ENCODE measurements at regions of chr9 and their contacts with region 1.

Region 1: GRCh38 chr9:129177791-129178559 is at the start of gene IER5L:
- DNase-seq: peak; percentile 88 to 96 (median 91)
- H3K4me3 ChIP-seq: peak within 1 kb of the TSS; percentile 71
- H3K4me3 Mint-ChIP-seq: peak within 1 kb of the TSS; percentile 91 to 98 (median 93)
- H3K27ac ChIP-seq: peak within 1 kb of the TSS; percentile 72
- H3K27ac Mint-ChIP-seq: peak within 1 kb of the TSS; percentile 47 to 91 (median 80)
- H3K4me1 ChIP-seq: no peaks in the 10 kb centered on the region
- H3K4me1 Mint-ChIP-seq: peaks cover 9 to 20% (median 9%) of the 10 kb centered on the region in 3 donors
- H3K27me3 ChIP-seq: peaks cover under 1% of the 10 kb centered on the region
- H3K27me3 Mint-ChIP-seq: peaks cover 0 to 4% of the 10 kb centered on the region in 2 donors
- total RNA-seq, gene IER5L: 2.8 to 3.0 TPM

Region 2: GRCh38 chr9:129131300-129132145 is 46.5 kb before region 1 on chr9:
- CTCF ChIA-PET with region 1: interaction called, 16 read pairs
- POLR2A ChIA-PET with region 1: no interaction called
- DNase-seq: peak; percentile 75 to 87 (median 77)
- H3K4me3 ChIP-seq: no peak overlapping the region
- H3K4me3 Mint-ChIP-seq: peak overlapping the region in 1 of 7 donors; percentile 13
- H3K27ac ChIP-seq: no peak overlapping the region
- H3K27ac Mint-ChIP-seq: peak overlapping the region in 5 of 8 donors; percentile 32 to 87 (median 63)
- H3K4me1 ChIP-seq: peaks cover 5% of the 10 kb centered on the region
- H3K4me1 Mint-ChIP-seq: peaks cover 5 to 6% (median 6%) of the 10 kb centered on the region in 3 donors
- H3K27me3 ChIP-seq: no peaks in the 10 kb centered on the region
- H3K27me3 Mint-ChIP-seq: no peaks in the 10 kb centered on the region

Region 3: GRCh38 chr9:129145822-129146292 is 32.1 kb before region 1 on chr9:
- CTCF ChIA-PET with region 1: interaction called, 122 read pairs
- POLR2A ChIA-PET with region 1: interaction called, 5 read pairs
- DNase-seq: no peak
- H3K4me3 ChIP-seq: no peak overlapping the region
- H3K4me3 Mint-ChIP-seq: peak overlapping the region in 1 of 7 donors; percentile 63
- H3K27ac ChIP-seq: no peak overlapping the region
- H3K27ac Mint-ChIP-seq: no peak overlapping the region
- H3K4me1 ChIP-seq: peaks cover 24% of the 10 kb centered on the region
- H3K4me1 Mint-ChIP-seq: peaks cover 13 to 29% (median 16%) of the 10 kb centered on the region in 3 donors
- H3K27me3 ChIP-seq: no peaks in the 10 kb centered on the region
- H3K27me3 Mint-ChIP-seq: peaks cover 0 to 1% of the 10 kb centered on the region in 2 donors

Region 4: DNA sequence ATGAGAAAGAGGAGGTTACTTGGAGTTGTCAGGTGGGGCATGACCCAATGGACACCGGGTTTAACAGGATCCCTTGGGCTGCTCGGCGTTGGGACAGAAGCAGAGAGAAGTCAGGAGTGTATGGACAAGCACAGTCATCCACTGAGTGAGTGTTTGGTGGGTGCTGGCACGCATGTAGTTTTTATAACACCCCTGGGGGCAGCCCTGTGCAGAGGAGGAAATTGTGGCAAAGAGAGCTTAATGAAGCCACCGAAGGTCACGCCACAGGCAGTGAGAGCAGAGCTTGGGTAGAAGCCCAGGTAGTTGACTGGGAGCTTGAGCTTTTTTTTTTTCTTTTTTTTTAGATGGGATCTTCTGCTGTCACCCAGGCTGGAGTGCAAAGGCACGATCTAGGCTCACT is 43.3 kb after region 1 on chr9:
- CTCF ChIA-PET with region 1: interaction called, 4 read pairs
- POLR2A ChIA-PET with region 1: interaction called, 12 read pairs
- DNase-seq: peak in 4 of 5 donors; percentile 13 to 78 (median 34)
- H3K4me3 ChIP-seq: no peak overlapping the region
- H3K4me3 Mint-ChIP-seq: peak overlapping the region in 6 of 7 donors; percentile 59 to 89 (median 73)
- H3K27ac ChIP-seq: no peak overlapping the region
- H3K27ac Mint-ChIP-seq: peak overlapping the region; percentile 15 to 84 (median 74)
- H3K4me1 ChIP-seq: peaks cover 31% of the 10 kb centered on the region
- H3K4me1 Mint-ChIP-seq: peaks cover 35 to 54% (median 41%) of the 10 kb centered on the region in 3 donors
- H3K27me3 ChIP-seq: no peaks in the 10 kb centered on the region
- H3K27me3 Mint-ChIP-seq: no peaks in the 10 kb centered on the region

Region 5: DNA sequence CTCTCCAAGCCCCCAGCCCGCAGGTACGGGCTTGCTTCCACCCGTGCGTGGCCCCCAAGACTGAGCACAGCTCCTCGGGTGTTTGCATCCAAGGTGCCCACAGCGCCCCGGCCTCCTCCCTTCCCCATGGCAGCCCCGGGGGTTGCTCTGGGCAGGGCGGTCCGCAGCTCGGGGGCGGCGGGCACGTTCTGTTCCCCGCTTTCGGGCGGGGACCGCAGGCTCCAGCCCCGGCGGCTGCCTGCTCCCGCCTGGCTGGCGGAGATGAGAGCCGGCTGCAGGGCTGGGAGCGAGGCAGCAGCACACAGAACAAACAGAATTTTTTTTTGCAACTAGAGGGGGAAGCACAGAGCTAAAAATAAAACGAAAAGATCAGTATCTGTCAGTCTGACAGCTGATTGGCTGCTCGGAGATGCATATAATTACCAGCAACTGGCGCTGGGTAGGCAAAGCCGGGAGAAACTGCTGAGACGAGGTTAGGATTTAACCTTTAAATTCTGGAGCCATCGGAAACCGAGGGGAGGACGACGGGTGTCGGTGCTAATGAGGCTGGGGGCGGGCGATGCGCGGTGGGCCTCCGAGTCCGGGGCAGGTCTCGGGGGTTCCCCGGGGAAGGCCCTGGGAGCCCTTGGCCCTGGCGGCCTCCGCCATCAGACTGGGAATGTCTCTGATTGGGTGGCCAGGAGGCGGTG is 142.7 kb after region 1 on chr9:
- CTCF ChIA-PET with region 1: interaction called, 16 read pairs
- POLR2A ChIA-PET with region 1: interaction called, 5 read pairs
- DNase-seq: peak; percentile 8 to 76 (median 57)
- H3K4me3 ChIP-seq: peak overlapping the region; percentile 53
- H3K4me3 Mint-ChIP-seq: peak overlapping the region; percentile 30 to 84 (median 82)
- H3K27ac ChIP-seq: peak overlapping the region; percentile 11
- H3K27ac Mint-ChIP-seq: peak overlapping the region in 6 of 8 donors; percentile 56 to 93 (median 90)
- H3K4me1 ChIP-seq: peaks cover 17% of the 10 kb centered on the region
- H3K4me1 Mint-ChIP-seq: peaks cover 9 to 16% (median 11%) of the 10 kb centered on the region in 3 donors
- H3K27me3 ChIP-seq: no peaks in the 10 kb centered on the region
- H3K27me3 Mint-ChIP-seq: peaks cover 0 to 3% of the 10 kb centered on the region in 2 donors

Region 6: GRCh38 chr9:129610473-129611301 is 432.7 kb after region 1 on chr9:
- CTCF ChIA-PET with region 1: interaction called, 24 read pairs
- POLR2A ChIA-PET with region 1: interaction called, 16 read pairs
- DNase-seq: peak; percentile 67 to 82 (median 69)
- H3K4me3 ChIP-seq: peak overlapping the region; percentile 77
- H3K4me3 Mint-ChIP-seq: peak overlapping the region; percentile 73 to 90 (median 84)
- H3K27ac ChIP-seq: peak overlapping the region; percentile 61
- H3K27ac Mint-ChIP-seq: peak overlapping the region; percentile 36 to 99 (median 82)
- H3K4me1 ChIP-seq: peaks cover 29% of the 10 kb centered on the region
- H3K4me1 Mint-ChIP-seq: peaks cover 26 to 51% (median 28%) of the 10 kb centered on the region in 3 donors
- H3K27me3 ChIP-seq: no peaks in the 10 kb centered on the region
- H3K27me3 Mint-ChIP-seq: peaks cover 0 to 9% of the 10 kb centered on the region in 2 donors